ENCODE measurements at regions of chr6 and their contacts with region 1.

Region 1: GRCh38 chr6:13908955-13909381 is 15.8 kb upstream of the RNF182 start:
- H3K4me3 Mint-ChIP-seq: no peak overlapping the region
- H3K27ac Mint-ChIP-seq: no peak overlapping the region
- H3K4me1 Mint-ChIP-seq: no peaks in the 10 kb centered on the region
- H3K27me3 Mint-ChIP-seq: peaks cover 21% of the 10 kb centered on the region

Region 2: GRCh38 chr6:14046476-14047068 is 137.6 kb after region 1 on chr6:
- intact Hi-C with region 1: loop called (anchors 5 kb)
- H3K4me3 Mint-ChIP-seq: no peak overlapping the region
- H3K27ac Mint-ChIP-seq: no peak overlapping the region
- H3K4me1 Mint-ChIP-seq: no peaks in the 10 kb centered on the region
- H3K27me3 Mint-ChIP-seq: peaks cover 33% of the 10 kb centered on the region

Region 3: DNA sequence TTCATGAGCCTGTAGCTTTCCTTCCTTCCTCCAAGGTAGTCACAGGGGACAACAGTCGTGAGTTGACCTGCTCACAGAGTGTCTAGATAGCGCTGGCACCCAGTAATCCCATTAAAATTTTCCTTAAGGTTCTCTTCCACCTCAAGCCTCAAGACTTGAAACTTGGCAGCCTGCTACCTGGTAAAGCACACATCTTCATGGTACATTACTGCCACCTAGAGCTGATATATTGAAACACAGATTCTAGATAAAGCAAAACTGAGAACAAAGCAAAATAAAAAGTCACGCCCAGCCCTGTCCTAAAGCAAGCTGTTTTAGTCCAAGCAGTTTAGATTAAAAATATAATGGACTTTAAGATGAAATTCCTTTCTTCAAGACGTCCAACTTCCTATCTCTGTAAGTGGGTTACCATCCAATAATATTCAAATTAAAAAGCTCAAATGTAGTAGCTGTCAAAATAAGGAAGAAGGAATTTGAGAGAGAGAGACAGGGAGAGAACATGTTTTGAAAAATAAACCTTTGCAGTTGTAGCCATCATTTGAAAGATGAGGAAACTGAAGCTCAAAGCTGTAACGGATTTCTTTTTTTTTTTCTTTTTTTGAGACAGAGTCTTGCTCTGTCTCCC is 157.9 kb after region 1 on chr6:
- intact Hi-C with region 1: loop called (anchors 2 kb)
- H3K4me3 Mint-ChIP-seq: no peak overlapping the region
- H3K27ac Mint-ChIP-seq: peak overlapping the region; percentile 27
- H3K4me1 Mint-ChIP-seq: peaks cover 24% of the 10 kb centered on the region
- H3K27me3 Mint-ChIP-seq: peaks cover 32% of the 10 kb centered on the region

Region 4: GRCh38 chr6:14464055-14464454 is 555.1 kb after region 1 on chr6:
- intact Hi-C with region 1: no loop called
- H3K4me3 Mint-ChIP-seq: no peak overlapping the region
- H3K27ac Mint-ChIP-seq: no peak overlapping the region
- H3K4me1 Mint-ChIP-seq: no peaks in the 10 kb centered on the region
- H3K27me3 Mint-ChIP-seq: no peaks in the 10 kb centered on the region